ENCODE measurements at regions of chr5 and their contacts with region 1.

Region 1: GRCh38 chr5:37208883-37209797 is 40.0 kb downstream of the CPLANE1 start:
- ATAC-seq: peak in 3 of 8 experiments; percentile 92 to 96 (median 94)
- H3K4me3 ChIP-seq: no peak overlapping the region
- H3K27ac ChIP-seq: no peak overlapping the region
- H3K4me1 ChIP-seq: no peaks in the 10 kb centered on the region

Region 2: GRCh38 chr5:37043688-37044087 is 165.5 kb before region 1 on chr5:
- in situ Hi-C with region 1: loop called in 1 of 9 experiments (anchors 25 kb)
- ATAC-seq: peak in 2 of 8 experiments; percentile 29 to 33
- H3K4me3 ChIP-seq: no peak overlapping the region
- H3K27ac ChIP-seq: no peak overlapping the region
- H3K4me1 ChIP-seq: no peaks in the 10 kb centered on the region

Region 3: GRCh38 chr5:37308796-37309195 is 99.7 kb after region 1 on chr5:
- in situ Hi-C with region 1: loop called in 1 of 9 experiments (anchors 25 kb)
- ATAC-seq: no peak
- H3K4me3 ChIP-seq: no peak overlapping the region
- H3K27ac ChIP-seq: no peak overlapping the region
- H3K4me1 ChIP-seq: no peaks in the 10 kb centered on the region